Activated CD4-positive, alpha-beta memory T cell treated with anti-CD3 and anti-CD28 coated beads, Interleukin-2, amount 10 ng/mL, durations not matched to agents 7 days and 5 days (primary cell): ENCODE measurements at regions of chr3 and their contacts with region 1.

Region 1: DNA sequence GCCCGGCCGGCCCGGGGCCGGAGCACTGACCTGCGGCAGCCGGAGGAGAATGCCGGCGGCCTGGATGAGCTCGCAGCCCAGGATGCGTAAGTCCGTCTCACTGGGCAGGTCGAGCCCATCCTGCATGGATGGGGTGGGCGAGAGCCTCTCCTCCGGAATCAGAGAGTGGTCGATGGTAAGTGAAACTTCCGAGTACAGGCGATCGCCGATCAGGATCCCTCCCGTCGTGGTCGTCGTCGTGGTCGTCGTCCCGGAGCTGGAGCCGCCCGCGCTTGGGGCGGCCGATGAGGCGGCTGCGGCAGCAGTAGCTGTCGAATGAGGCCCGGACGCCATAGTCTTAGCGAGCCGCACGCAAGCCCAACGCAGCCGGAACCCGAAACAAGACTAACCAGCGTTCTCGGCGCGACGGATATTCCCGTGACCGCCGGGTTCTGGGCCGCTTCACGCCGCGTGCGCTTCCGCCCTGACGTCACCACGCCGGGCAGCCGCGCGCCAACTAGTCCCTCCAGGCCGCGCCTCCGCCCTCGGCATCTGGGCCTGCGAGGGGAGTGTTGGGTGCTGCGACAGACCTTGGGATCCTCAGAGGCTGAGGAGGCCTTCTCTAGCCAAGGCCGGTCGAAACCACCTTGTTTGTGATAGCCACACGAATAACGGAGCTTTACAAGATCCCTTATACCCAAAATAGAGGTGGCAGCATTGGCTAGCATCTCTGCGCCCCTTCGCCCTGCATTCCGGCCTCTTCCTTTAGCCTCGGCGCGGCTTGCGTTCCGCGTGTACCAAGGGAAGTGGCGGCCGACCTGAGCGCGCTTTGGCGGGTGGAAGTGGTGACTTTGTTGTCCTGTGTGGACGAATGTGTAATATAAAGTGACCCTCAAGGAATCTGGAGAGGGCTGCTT is at the start of gene CCNL1:
- DNase-seq: peak; percentile 96
- H3K4me3 Mint-ChIP-seq: peak within 1 kb of the TSS; percentile 100
- H3K27ac Mint-ChIP-seq: peak within 1 kb of the TSS; percentile 100
- H3K4me1 Mint-ChIP-seq: peaks cover 57% of the 10 kb centered on the region
- H3K27me3 Mint-ChIP-seq: no peaks in the 10 kb centered on the region
- total RNA-seq, gene CCNL1: 223 to 249 TPM

Region 2: GRCh38 chr3:156483961-156484787 is 675.8 kb before region 1 on chr3:
- CTCF ChIA-PET with region 1: no interaction called
- POLR2A ChIA-PET with region 1: interaction called, 25 read pairs
- DNase-seq: peak; percentile 62
- H3K4me3 Mint-ChIP-seq: peak overlapping the region; percentile 72
- H3K27ac Mint-ChIP-seq: peak overlapping the region; percentile 88
- H3K4me1 Mint-ChIP-seq: peaks cover 42% of the 10 kb centered on the region
- H3K27me3 Mint-ChIP-seq: no peaks in the 10 kb centered on the region

Region 3: DNA sequence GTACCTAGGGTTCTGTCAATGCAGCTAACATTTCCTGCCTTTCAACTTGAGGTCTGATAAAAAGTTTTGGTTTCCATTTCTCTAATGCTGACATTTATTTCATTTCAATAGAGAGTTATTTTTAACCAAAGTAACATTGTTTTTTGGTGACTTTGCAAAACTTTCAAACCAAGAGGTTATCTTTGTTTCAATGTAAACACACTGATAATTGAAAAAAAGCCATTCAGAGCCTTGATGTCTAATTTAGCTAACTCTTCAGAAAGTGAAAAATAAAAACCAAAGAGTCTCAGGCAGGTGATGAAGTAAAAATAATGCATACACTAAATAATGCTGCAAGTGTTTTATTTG is 495.2 kb before region 1 on chr3:
- CTCF ChIA-PET with region 1: no interaction called
- POLR2A ChIA-PET with region 1: interaction called, 14 read pairs
- DNase-seq: no peak
- H3K4me3 Mint-ChIP-seq: peak overlapping the region; percentile 59
- H3K27ac Mint-ChIP-seq: peak overlapping the region; percentile 92
- H3K4me1 Mint-ChIP-seq: peaks cover 68% of the 10 kb centered on the region
- H3K27me3 Mint-ChIP-seq: no peaks in the 10 kb centered on the region

Region 4: GRCh38 chr3:157130467-157131251 is 29.4 kb before region 1 on chr3:
- CTCF ChIA-PET with region 1: no interaction called
- POLR2A ChIA-PET with region 1: interaction called, 84 read pairs
- DNase-seq: peak; percentile 82
- H3K4me3 Mint-ChIP-seq: peak overlapping the region; percentile 60
- H3K27ac Mint-ChIP-seq: peak overlapping the region; percentile 99
- H3K4me1 Mint-ChIP-seq: peaks cover 88% of the 10 kb centered on the region
- H3K27me3 Mint-ChIP-seq: no peaks in the 10 kb centered on the region

Region 5: DNA sequence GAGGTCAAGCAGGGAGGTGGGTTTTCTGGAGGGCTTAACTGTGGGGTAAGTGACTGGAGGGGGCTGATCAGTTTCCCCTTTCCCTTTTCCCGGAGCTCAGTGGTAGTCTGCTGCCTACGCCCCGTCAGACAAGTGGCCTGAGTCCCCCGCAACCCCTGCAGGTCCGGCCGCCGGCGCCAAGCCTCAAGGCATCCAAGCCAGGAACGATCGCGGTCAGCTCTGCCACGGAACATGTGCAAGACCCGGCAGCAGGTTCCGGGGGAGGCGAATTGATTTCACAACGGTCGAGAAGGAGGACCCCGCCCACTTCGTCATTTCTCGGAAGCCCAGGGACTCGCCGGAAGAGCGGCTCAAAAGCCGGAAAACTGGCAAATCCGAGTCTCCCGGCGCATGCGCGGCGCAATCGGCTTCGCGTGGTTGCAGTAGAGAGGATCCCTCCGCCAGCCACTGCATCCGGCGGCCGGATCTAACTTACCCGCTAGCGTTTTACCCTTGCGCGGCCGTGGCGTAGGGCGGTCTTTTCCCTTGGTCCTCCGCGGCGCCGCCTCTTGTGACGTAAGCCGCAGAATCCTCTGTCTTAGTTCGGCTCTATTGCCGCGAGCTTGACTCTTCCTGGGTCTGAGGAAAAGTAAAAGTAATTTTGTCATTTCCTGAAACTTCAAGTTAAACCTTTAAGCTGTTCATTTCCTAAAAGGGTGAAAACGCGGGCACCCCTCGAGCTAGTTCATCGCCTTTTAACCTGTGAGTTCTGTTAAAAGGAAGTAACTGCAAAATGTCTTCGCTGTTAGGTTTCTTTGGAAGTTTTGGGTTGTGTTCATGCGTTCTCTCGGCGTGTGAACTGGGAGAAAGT is 14.9 kb after region 1 on chr3:
- CTCF ChIA-PET with region 1: interaction called, 92 read pairs
- POLR2A ChIA-PET with region 1: interaction called, 830 read pairs
- DNase-seq: peak; percentile 99
- H3K4me3 Mint-ChIP-seq: peak overlapping the region; percentile 89
- H3K27ac Mint-ChIP-seq: peak overlapping the region; percentile 97
- H3K4me1 Mint-ChIP-seq: peaks cover 21% of the 10 kb centered on the region
- H3K27me3 Mint-ChIP-seq: peaks cover 4% of the 10 kb centered on the region